PC-3 (cell line): ENCODE measurements at regions of chr13 and their contacts with region 1.

Region 1: DNA sequence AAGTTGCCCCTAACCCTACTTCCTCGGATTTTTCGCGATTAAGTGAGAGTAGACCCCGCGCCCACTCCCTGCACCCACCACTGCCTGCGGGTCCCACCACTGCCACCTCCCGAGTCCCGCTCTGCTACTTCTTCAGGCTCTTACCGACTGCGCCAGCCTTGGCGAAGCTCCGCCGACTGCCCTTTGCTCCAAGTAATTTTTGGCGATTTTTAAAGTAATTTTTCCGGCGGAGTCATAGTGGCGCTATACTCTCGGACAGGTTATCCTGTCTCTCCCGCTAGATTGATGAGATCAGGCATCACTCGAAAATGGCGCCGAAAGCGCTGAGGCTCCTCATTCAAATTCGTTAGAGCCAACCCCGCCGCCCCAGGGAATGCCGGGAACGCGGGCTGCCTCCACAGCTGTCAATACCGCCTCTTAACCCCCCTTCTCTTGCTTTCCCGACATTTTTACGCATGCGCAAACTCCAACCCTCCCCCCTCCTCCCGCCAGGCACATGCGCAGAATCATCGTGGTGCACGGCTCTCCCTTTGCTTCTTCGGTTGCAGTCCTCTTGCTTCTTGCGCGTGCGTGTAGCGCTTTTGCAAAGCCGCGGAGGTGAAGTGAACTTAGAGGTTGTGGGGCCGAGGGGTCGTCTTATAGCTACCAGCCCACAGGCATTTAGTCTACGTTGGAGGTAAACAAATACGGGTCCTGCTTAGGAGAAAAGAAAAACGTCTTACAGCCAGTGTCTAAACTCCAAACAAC is 66.6 kb downstream of the KCNRG start:
- DNase-seq: peak; percentile 95
- ATAC-seq: peak; percentile 70
- H3K4me3 ChIP-seq: peak overlapping the region; percentile 95
- H3K27ac ChIP-seq: peak overlapping the region; percentile 92
- H3K4me1 ChIP-seq: peaks cover 23% of the 10 kb centered on the region
- H3K27me3 ChIP-seq: no peaks in the 10 kb centered on the region
- CTCF ChIP-seq: peak; percentile 16; the same call in 1 of the 2 replicates

Region 2: GRCh38 chr13:49669735-49670309 is 412.0 kb before region 1 on chr13:
- CTCF ChIA-PET with region 1: no interaction called
- POLR2A ChIA-PET with region 1: no interaction called
- intact Hi-C with region 1: loop called (anchors 5 kb)
- DNase-seq: peak; percentile 68
- ATAC-seq: peak; percentile 88
- H3K4me3 ChIP-seq: no peak overlapping the region
- H3K27ac ChIP-seq: no peak overlapping the region
- H3K4me1 ChIP-seq: peaks cover 6% of the 10 kb centered on the region; the same call in 1 of the 2 replicates
- H3K27me3 ChIP-seq: no peaks in the 10 kb centered on the region
- CTCF ChIP-seq: peak; percentile 75

Region 3: GRCh38 chr13:49976314-49977258 is 105.3 kb before region 1 on chr13:
- CTCF ChIA-PET with region 1: interaction called, 3 read pairs
- POLR2A ChIA-PET with region 1: no interaction called
- intact Hi-C with region 1: loop called (anchors 2 kb)
- DNase-seq: peak; percentile 72
- ATAC-seq: peak; percentile 91
- H3K4me3 ChIP-seq: peak overlapping the region; percentile 41; the same call in 1 of the 2 replicates
- H3K27ac ChIP-seq: peak overlapping the region; percentile 79
- H3K4me1 ChIP-seq: peaks cover 13% of the 10 kb centered on the region
- H3K27me3 ChIP-seq: no peaks in the 10 kb centered on the region
- CTCF ChIP-seq: peak; percentile 93

Region 4: GRCh38 chr13:50116430-50116973 is 34.6 kb after region 1 on chr13:
- CTCF ChIA-PET with region 1: no interaction called
- POLR2A ChIA-PET with region 1: no interaction called
- intact Hi-C with region 1: loop called (anchors 2 kb)
- DNase-seq: peak; percentile 53
- ATAC-seq: peak; percentile 85
- H3K4me3 ChIP-seq: peak overlapping the region; percentile 55; the same call in 1 of the 2 replicates
- H3K27ac ChIP-seq: peak overlapping the region; percentile 59
- H3K4me1 ChIP-seq: peaks cover 8% of the 10 kb centered on the region
- H3K27me3 ChIP-seq: no peaks in the 10 kb centered on the region
- CTCF ChIP-seq: no peak

Region 5: GRCh38 chr13:50170447-50171037 is 88.7 kb after region 1 on chr13:
- CTCF ChIA-PET with region 1: no interaction called
- POLR2A ChIA-PET with region 1: no interaction called
- intact Hi-C with region 1: loop called (anchors 10 kb)
- DNase-seq: peak; percentile 32
- ATAC-seq: no peak; the same call in 1 of the 2 replicates
- H3K4me3 ChIP-seq: no peak overlapping the region
- H3K27ac ChIP-seq: no peak overlapping the region
- H3K4me1 ChIP-seq: no peaks in the 10 kb centered on the region
- H3K27me3 ChIP-seq: no peaks in the 10 kb centered on the region
- CTCF ChIP-seq: peak; percentile 62

Region 6: GRCh38 chr13:50357586-50358118 is 275.8 kb after region 1 on chr13:
- CTCF ChIA-PET with region 1: no interaction called
- POLR2A ChIA-PET with region 1: no interaction called
- intact Hi-C with region 1: loop called (anchors 2 kb)
- DNase-seq: peak; percentile 90
- ATAC-seq: peak; percentile 92
- H3K4me3 ChIP-seq: peak overlapping the region; percentile 24; the same call in 1 of the 2 replicates
- H3K27ac ChIP-seq: peak overlapping the region; percentile 84
- H3K4me1 ChIP-seq: peaks cover 37% of the 10 kb centered on the region
- H3K27me3 ChIP-seq: no peaks in the 10 kb centered on the region
- CTCF ChIP-seq: no peak

Region 7: DNA sequence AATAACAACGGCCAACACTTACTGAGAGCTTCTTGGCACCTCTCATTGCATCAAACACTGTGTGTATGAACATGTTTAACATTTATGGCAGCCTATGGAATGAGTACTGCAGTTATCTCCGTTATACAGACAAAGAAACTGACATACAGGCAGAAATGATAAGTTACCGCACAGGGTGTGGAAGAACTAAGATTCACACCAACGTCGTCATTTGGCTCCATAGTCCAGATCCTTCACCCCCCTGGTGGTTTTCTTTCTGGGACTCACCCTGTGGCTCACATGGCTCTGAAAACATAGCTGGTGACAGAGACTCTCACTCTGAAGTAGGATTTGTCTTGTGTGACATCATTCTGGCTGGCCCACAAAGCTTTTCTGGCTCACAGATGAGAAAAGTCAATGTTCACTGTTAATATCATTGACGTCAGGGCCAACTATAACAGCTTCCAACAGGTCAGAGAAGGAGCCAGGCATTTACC is 531.5 kb after region 1 on chr13:
- CTCF ChIA-PET with region 1: no interaction called
- POLR2A ChIA-PET with region 1: no interaction called
- intact Hi-C with region 1: no loop called
- DNase-seq: no peak
- ATAC-seq: no peak
- H3K4me3 ChIP-seq: no peak overlapping the region
- H3K27ac ChIP-seq: no peak overlapping the region
- H3K4me1 ChIP-seq: peaks cover 17% of the 10 kb centered on the region
- H3K27me3 ChIP-seq: peaks cover 6% of the 10 kb centered on the region; the same call in 1 of the 2 replicates
- CTCF ChIP-seq: no peak

Region 8: GRCh38 chr13:50713523-50714248 is 631.8 kb after region 1 on chr13:
- CTCF ChIA-PET with region 1: no interaction called
- POLR2A ChIA-PET with region 1: no interaction called
- intact Hi-C with region 1: no loop called
- DNase-seq: peak; percentile 31
- ATAC-seq: no peak
- H3K4me3 ChIP-seq: no peak overlapping the region
- H3K27ac ChIP-seq: no peak overlapping the region
- H3K4me1 ChIP-seq: no peaks in the 10 kb centered on the region
- H3K27me3 ChIP-seq: no peaks in the 10 kb centered on the region
- CTCF ChIP-seq: no peak

Region 9: GRCh38 chr13:50760751-50761150 is 678.9 kb after region 1 on chr13:
- CTCF ChIA-PET with region 1: no interaction called
- POLR2A ChIA-PET with region 1: no interaction called
- intact Hi-C with region 1: no loop called
- DNase-seq: no peak
- ATAC-seq: no peak
- H3K4me3 ChIP-seq: no peak overlapping the region
- H3K27ac ChIP-seq: no peak overlapping the region
- H3K4me1 ChIP-seq: no peaks in the 10 kb centered on the region
- H3K27me3 ChIP-seq: peaks cover 6% of the 10 kb centered on the region; the same call in 1 of the 2 replicates
- CTCF ChIP-seq: no peak

Region 10: DNA sequence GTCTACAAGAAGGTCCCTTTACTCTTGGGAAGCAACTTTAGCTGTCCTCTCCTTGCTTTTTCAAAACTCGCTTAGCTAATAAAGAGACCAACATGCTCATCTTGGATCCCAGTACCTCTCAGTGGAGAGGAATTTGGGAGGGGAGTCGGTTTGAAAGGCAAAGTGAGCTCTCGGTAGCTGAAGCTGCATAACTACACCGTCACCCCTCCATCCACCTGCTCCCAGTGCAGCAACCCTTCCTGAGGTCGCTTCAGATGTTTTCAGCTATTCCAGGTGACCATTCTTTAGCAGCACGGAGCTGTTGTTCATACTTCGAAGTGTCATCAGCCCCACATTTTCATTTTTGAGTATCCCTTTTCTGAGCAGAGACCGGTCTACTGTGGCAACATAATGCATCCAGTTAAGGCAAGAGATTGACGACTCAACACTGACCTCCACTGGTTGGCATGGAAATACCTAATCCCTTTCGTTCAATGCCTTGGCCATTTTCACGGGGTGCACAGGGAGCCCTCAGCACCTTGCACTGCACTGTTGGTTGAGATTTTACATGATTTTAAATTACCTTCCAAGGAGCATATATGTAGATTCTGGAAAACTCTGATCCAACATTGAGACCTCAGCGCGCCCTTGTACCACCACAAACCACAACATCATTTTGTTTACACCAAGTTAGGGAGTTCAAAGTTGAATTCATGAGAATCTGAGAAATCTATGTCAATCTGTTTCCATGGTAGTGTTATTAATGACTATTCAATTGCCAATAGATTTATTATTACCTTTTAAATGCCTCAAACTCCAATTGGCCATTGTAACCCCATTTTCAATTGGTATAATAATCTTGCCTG is 719.5 kb after region 1 on chr13:
- CTCF ChIA-PET with region 1: no interaction called
- POLR2A ChIA-PET with region 1: no interaction called
- intact Hi-C with region 1: loop called (anchors 2 kb)
- DNase-seq: peak; percentile 71
- ATAC-seq: peak; percentile 86
- H3K4me3 ChIP-seq: no peak overlapping the region
- H3K27ac ChIP-seq: no peak overlapping the region
- H3K4me1 ChIP-seq: peaks cover 9% of the 10 kb centered on the region; the same call in 1 of the 2 replicates
- H3K27me3 ChIP-seq: no peaks in the 10 kb centered on the region
- CTCF ChIP-seq: peak; percentile 73